ENCODE measurements at regions of chr21 and their contacts with region 1.

Region 1: GRCh38 chr21:42337830-42338728 is 12.7 kb downstream of the TFF2 start:
- DNase-seq: peak; percentile 81 to 94 (median 91)
- H3K4me3 ChIP-seq: peak overlapping the region in 1 of 7 experiments; percentile 28
- H3K27ac ChIP-seq: no peak overlapping the region
- H3K4me1 ChIP-seq: peaks cover 0 to 9% (median 6%) of the 10 kb centered on the region in 4 experiments
- H3K27me3 ChIP-seq: peaks cover 0 to 3% (median 0%) of the 10 kb centered on the region in 5 experiments

Region 2: GRCh38 chr21:42151091-42151947 is 186.8 kb before region 1 on chr21:
- CTCF ChIA-PET with region 1: no interaction called
- POLR2A ChIA-PET with region 1: no interaction called
- DNase-seq: no peak
- H3K4me3 ChIP-seq: no peak overlapping the region
- H3K27ac ChIP-seq: no peak overlapping the region
- H3K4me1 ChIP-seq: peaks cover 0 to 17% (median 1%) of the 10 kb centered on the region in 4 experiments
- H3K27me3 ChIP-seq: no peaks in the 10 kb centered on the region

Region 3: DNA sequence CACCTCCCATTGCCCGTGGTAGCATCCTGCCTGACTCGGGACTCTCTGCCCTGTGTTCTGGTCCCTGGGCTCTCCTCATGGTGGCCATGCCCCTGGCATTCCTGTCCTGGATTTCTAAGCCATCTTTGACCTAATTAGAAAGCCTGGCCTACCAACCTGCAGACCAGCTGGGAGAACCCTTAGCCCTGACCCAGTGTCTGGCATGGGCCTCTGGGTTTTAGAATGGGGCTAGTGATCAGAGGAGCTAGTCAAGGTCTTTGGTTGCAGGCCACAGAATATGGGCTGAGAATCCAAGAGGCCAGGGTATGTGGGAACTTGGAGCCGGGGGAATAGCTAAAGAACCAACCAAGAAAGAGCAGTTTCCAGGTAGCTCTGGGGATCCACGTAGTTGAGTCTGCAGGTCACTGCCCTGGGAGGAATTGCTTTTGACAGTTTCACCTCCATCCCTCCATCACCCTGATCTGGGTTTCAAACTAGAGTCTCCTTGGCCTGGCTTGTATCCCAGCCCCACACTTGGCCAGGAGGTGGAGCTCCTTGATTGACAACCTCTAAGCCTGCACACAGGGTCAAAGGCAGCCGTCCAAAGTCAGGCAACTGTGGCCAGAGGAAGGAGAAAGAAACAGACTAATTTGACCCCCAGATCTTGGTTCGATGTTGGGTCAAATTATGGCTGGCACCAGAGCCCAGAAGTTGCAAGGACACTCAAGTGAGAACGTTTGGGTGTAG is 173.9 kb before region 1 on chr21:
- CTCF ChIA-PET with region 1: no interaction called
- POLR2A ChIA-PET with region 1: no interaction called
- DNase-seq: peak; percentile 49 to 64 (median 54)
- H3K4me3 ChIP-seq: no peak overlapping the region
- H3K27ac ChIP-seq: no peak overlapping the region
- H3K4me1 ChIP-seq: peaks cover 0 to 30% (median 26%) of the 10 kb centered on the region in 4 experiments
- H3K27me3 ChIP-seq: no peaks in the 10 kb centered on the region

Region 4: DNA sequence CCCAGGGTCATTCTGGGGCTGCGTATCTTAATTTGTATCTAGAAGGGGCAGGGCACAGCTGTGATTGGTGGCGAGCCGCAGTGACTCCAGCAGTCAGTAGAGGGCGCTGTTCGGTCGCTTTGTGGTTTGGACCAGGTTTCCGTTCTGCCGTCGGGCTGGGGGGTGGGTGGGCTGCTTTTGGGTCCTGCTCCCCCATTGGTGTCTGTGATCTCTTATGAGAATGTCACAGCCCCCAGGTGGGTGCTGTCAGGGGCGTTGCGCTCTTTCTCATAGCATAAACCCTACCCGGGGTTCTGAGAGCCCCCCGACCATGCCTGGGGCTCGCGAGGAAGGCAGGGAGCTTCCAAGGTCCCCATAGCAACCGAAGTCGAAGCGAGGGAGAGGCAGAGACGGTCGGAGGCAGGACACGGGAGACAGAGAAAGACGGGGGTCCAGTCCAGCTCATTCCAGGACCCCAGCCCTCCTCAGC is 28.3 kb before region 1 on chr21:
- CTCF ChIA-PET with region 1: interaction called, 43 read pairs
- POLR2A ChIA-PET with region 1: no interaction called
- DNase-seq: peak; percentile 63 to 89 (median 87)
- H3K4me3 ChIP-seq: peak overlapping the region in 5 of 7 experiments; percentile 23 to 62 (median 46)
- H3K27ac ChIP-seq: no peak overlapping the region
- H3K4me1 ChIP-seq: peaks cover 13 to 51% (median 46%) of the 10 kb centered on the region in 4 experiments
- H3K27me3 ChIP-seq: no peaks in the 10 kb centered on the region

Region 5: GRCh38 chr21:42395910-42396625 is 58.0 kb after region 1 on chr21 and contains the start of gene TMPRSS3:
- CTCF ChIA-PET with region 1: interaction called, 11 read pairs
- POLR2A ChIA-PET with region 1: no interaction called
- DNase-seq: no peak
- H3K4me3 ChIP-seq: no peak within 1 kb of the TSS
- H3K27ac ChIP-seq: no peak within 1 kb of the TSS
- H3K4me1 ChIP-seq: peaks cover 0 to 7% (median 3%) of the 10 kb centered on the region in 4 experiments
- H3K27me3 ChIP-seq: no peaks in the 10 kb centered on the region

Region 6: DNA sequence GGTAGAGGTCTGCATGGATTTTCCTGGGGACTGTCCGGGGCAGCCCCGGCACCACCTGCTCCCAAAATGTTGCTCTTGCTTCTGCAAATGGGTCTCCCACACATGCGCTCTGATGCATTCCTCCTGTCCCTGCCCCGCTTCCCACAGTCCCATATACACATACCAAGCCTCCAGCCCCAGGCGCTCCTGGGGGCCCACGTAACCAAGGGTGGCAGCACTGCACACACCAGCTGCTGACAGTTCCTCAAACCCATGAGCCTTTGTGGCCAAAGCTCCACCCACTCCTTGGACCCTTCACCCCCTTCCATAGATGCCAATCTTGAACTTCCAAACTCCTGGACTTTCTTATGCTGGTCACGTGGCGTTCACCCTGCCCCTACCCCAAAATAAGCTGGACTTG is 107.8 kb after region 1 on chr21:
- CTCF ChIA-PET with region 1: interaction called, 37 read pairs
- POLR2A ChIA-PET with region 1: no interaction called
- DNase-seq: no peak
- H3K4me3 ChIP-seq: no peak overlapping the region
- H3K27ac ChIP-seq: no peak overlapping the region
- H3K4me1 ChIP-seq: peaks cover 0 to 14% (median 7%) of the 10 kb centered on the region in 4 experiments
- H3K27me3 ChIP-seq: no peaks in the 10 kb centered on the region

Region 7: GRCh38 chr21:42453509-42454229 is 115.6 kb after region 1 on chr21:
- CTCF ChIA-PET with region 1: interaction called, 37 read pairs
- POLR2A ChIA-PET with region 1: no interaction called
- DNase-seq: peak in 1 of 3 donors; percentile 28
- H3K4me3 ChIP-seq: peak overlapping the region in 1 of 7 experiments; percentile 35
- H3K27ac ChIP-seq: no peak overlapping the region
- H3K4me1 ChIP-seq: peaks cover 5 to 50% (median 37%) of the 10 kb centered on the region in 4 experiments
- H3K27me3 ChIP-seq: no peaks in the 10 kb centered on the region

Measured in common myeloid progenitor, CD34-positive (primary cell).